B cell (primary cell): ENCODE measurements at regions of chr1 and their contacts with region 1.

Region 1: GRCh38 chr1:42766741-42767509 is at the starts of genes C1orf50 and P3H1:
- DNase-seq: peak; percentile 100
- ATAC-seq: peak; percentile 92
- H3K4me3 ChIP-seq: peak within 1 kb of the TSS; percentile 71 to 92 (median 76)
- H3K4me3 Mint-ChIP-seq: no peak within 1 kb of the TSS
- H3K27ac ChIP-seq: peak within 1 kb of the TSS; percentile 53 to 83
- H3K27ac Mint-ChIP-seq: peak within 1 kb of the TSS; percentile 98
- H3K4me1 ChIP-seq: peaks cover 27 to 31% of the 10 kb centered on the region in 2 donors
- H3K4me1 Mint-ChIP-seq: peaks cover 24% of the 10 kb centered on the region
- H3K27me3 ChIP-seq: no peaks in the 10 kb centered on the region
- H3K27me3 Mint-ChIP-seq: no peaks in the 10 kb centered on the region
- CTCF ChIP-seq: no peak
- total RNA-seq, gene C1orf50: 13.1 and 17.1 TPM in 2 replicates
- total RNA-seq, gene P3H1: 42.2 and 46.1 TPM in 2 replicates

Region 2: DNA sequence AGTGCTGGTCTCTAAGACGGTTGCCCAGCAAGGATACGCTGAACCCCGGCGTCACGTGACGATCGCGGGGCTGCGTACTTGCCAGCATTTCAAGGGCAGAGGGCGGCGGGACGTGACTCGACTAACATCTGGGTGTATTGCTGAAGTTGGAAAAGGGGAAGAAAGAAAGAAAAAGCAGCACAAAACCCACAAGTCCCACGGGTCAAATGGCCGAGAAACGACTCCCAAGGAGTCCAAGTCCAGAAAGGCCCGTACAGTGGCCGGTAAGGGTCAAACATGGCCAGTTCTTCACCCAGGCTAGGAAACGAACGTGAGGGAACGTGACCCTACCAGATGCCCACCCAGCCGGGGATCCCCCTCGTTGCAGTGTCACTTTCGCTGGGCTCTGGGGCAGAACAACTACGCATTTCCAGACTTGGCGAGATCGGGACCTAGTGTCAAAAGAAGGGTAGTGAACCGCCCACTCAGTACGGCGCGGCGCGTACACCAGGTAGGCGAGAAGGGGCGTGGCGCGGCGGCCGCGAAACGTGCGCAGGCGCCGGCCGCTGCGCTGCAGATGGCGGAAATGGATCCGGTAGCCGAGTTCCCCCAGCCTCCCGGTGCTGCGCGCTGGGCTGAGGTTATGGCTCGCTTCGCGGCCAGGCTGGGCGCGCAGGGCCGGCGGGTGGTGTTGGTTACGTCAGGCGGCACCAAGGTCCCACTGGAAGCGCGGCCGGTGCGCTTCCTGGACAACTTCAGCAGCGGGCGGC is 310.7 kb before region 1 on chr1 and contains the starts of genes PPCS and ZMYND12:
- CTCF ChIA-PET with region 1: no interaction called
- POLR2A ChIA-PET with region 1: no interaction called
- intact Hi-C with region 1: loop called (anchors 1 kb)
- DNase-seq: peak; percentile 99
- ATAC-seq: peak; percentile 88
- H3K4me3 ChIP-seq: peak within 1 kb of the TSS; percentile 89 to 99 (median 95)
- H3K4me3 Mint-ChIP-seq: peak within 1 kb of the TSS; percentile 99
- H3K27ac ChIP-seq: peak within 1 kb of the TSS; percentile 96 to 98
- H3K27ac Mint-ChIP-seq: peak within 1 kb of the TSS; percentile 99
- H3K4me1 ChIP-seq: peaks cover 18 to 21% of the 10 kb centered on the region in 2 donors
- H3K4me1 Mint-ChIP-seq: peaks cover 40% of the 10 kb centered on the region
- H3K27me3 ChIP-seq: no peaks in the 10 kb centered on the region
- H3K27me3 Mint-ChIP-seq: no peaks in the 10 kb centered on the region
- CTCF ChIP-seq: no peak
- total RNA-seq, gene PPCS: 68.2 and 74.9 TPM in 2 replicates
- total RNA-seq, gene ZMYND12: 0.27 and 0.79 TPM in 2 replicates

Region 3: GRCh38 chr1:42479599-42479998 is 287.3 kb before region 1 on chr1:
- CTCF ChIA-PET with region 1: no interaction called
- POLR2A ChIA-PET with region 1: no interaction called
- intact Hi-C with region 1: no loop called
- DNase-seq: no peak
- ATAC-seq: no peak
- H3K4me3 ChIP-seq: no peak overlapping the region
- H3K4me3 Mint-ChIP-seq: no peak overlapping the region
- H3K27ac ChIP-seq: no peak overlapping the region
- H3K27ac Mint-ChIP-seq: no peak overlapping the region
- H3K4me1 ChIP-seq: no peaks in the 10 kb centered on the region
- H3K4me1 Mint-ChIP-seq: no peaks in the 10 kb centered on the region
- H3K27me3 ChIP-seq: no peaks in the 10 kb centered on the region
- H3K27me3 Mint-ChIP-seq: no peaks in the 10 kb centered on the region
- CTCF ChIP-seq: no peak

Region 4: GRCh38 chr1:42777852-42778251 is 10.9 kb after region 1 on chr1:
- CTCF ChIA-PET with region 1: interaction called, 16 read pairs
- POLR2A ChIA-PET with region 1: interaction called, 5 read pairs
- intact Hi-C with region 1: no loop called
- DNase-seq: peak; percentile 45
- ATAC-seq: peak; percentile 60
- H3K4me3 ChIP-seq: no peak overlapping the region
- H3K4me3 Mint-ChIP-seq: no peak overlapping the region
- H3K27ac ChIP-seq: no peak overlapping the region
- H3K27ac Mint-ChIP-seq: no peak overlapping the region
- H3K4me1 ChIP-seq: no peaks in the 10 kb centered on the region
- H3K4me1 Mint-ChIP-seq: peaks cover 5% of the 10 kb centered on the region
- H3K27me3 ChIP-seq: no peaks in the 10 kb centered on the region
- H3K27me3 Mint-ChIP-seq: no peaks in the 10 kb centered on the region
- CTCF ChIP-seq: peak; percentile 70

Region 5: GRCh38 chr1:42886800-42887199 is 119.9 kb after region 1 on chr1:
- CTCF ChIA-PET with region 1: no interaction called
- POLR2A ChIA-PET with region 1: no interaction called
- intact Hi-C with region 1: no loop called
- DNase-seq: no peak
- ATAC-seq: no peak
- H3K4me3 ChIP-seq: no peak overlapping the region
- H3K4me3 Mint-ChIP-seq: no peak overlapping the region
- H3K27ac ChIP-seq: no peak overlapping the region
- H3K27ac Mint-ChIP-seq: no peak overlapping the region
- H3K4me1 ChIP-seq: no peaks in the 10 kb centered on the region
- H3K4me1 Mint-ChIP-seq: no peaks in the 10 kb centered on the region
- H3K27me3 ChIP-seq: no peaks in the 10 kb centered on the region
- H3K27me3 Mint-ChIP-seq: peaks cover 7% of the 10 kb centered on the region
- CTCF ChIP-seq: no peak

Region 6: DNA sequence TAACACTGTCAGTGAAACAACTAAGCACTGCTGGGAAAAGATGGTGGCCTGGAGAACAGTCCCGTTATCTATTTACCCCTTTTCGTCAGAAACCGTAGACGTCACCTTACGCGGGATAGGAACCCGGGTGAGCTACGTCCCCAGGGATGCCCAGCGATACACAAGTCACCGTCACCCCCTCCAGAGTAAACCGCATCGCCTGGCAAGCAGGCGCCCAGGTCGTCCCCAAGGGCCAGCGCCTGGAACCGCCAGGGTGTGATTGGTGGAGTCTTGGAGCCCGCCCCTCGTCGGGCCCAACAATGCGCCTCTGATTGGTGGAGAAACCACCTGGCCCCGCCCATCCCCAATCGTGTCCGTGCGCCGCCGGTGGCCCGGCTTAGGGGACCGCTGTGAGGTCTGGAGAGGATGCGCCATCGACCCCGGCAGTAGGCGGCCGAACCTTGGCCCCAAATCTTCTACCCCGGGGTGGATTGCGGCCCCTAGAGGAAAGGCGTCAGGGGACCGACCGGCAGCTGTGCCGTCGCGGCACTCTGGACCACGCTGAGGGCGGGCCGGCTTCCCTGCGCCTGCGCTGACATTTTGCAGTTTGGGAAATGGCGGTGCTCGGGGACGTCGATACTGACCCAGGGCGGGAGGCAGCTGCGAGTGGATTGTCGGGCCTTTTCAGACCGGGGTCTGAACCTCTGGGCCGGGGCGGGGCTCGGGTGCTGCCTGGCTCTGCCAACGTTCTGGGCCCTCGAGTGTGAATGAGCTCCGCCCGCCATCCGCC is 157.3 kb after region 1 on chr1:
- CTCF ChIA-PET with region 1: no interaction called
- POLR2A ChIA-PET with region 1: interaction called, 5 read pairs
- intact Hi-C with region 1: loop called (anchors 2 kb)
- DNase-seq: peak; percentile 97
- ATAC-seq: peak; percentile 86
- H3K4me3 ChIP-seq: peak overlapping the region; percentile 48 to 83 (median 80)
- H3K4me3 Mint-ChIP-seq: peak overlapping the region; percentile 86
- H3K27ac ChIP-seq: peak overlapping the region; percentile 96 to 98
- H3K27ac Mint-ChIP-seq: peak overlapping the region; percentile 92
- H3K4me1 ChIP-seq: peaks cover 23% of the 10 kb centered on the region in 2 donors
- H3K4me1 Mint-ChIP-seq: peaks cover 43% of the 10 kb centered on the region
- H3K27me3 ChIP-seq: no peaks in the 10 kb centered on the region
- H3K27me3 Mint-ChIP-seq: no peaks in the 10 kb centered on the region
- CTCF ChIP-seq: no peak

Region 7: GRCh38 chr1:43035821-43036741 is 269.2 kb after region 1 on chr1:
- CTCF ChIA-PET with region 1: no interaction called
- POLR2A ChIA-PET with region 1: no interaction called
- intact Hi-C with region 1: no loop called
- DNase-seq: no peak
- ATAC-seq: no peak
- H3K4me3 ChIP-seq: no peak overlapping the region
- H3K4me3 Mint-ChIP-seq: no peak overlapping the region
- H3K27ac ChIP-seq: no peak overlapping the region
- H3K27ac Mint-ChIP-seq: no peak overlapping the region
- H3K4me1 ChIP-seq: no peaks in the 10 kb centered on the region
- H3K4me1 Mint-ChIP-seq: peaks cover 4% of the 10 kb centered on the region
- H3K27me3 ChIP-seq: no peaks in the 10 kb centered on the region
- H3K27me3 Mint-ChIP-seq: peaks cover 3% of the 10 kb centered on the region
- CTCF ChIP-seq: no peak

Region 8: GRCh38 chr1:43367904-43368645 is 601.1 kb after region 1 on chr1 and contains the start of gene ELOVL1:
- CTCF ChIA-PET with region 1: interaction called, 3 read pairs
- POLR2A ChIA-PET with region 1: interaction called, 3 read pairs
- intact Hi-C with region 1: loop called (anchors 5 kb)
- DNase-seq: peak; percentile 94
- ATAC-seq: peak; percentile 88
- H3K4me3 ChIP-seq: peak within 1 kb of the TSS; percentile 64 to 90 (median 81)
- H3K4me3 Mint-ChIP-seq: peak within 1 kb of the TSS; percentile 96
- H3K27ac ChIP-seq: peak within 1 kb of the TSS; percentile 74 to 96
- H3K27ac Mint-ChIP-seq: peak within 1 kb of the TSS; percentile 97
- H3K4me1 ChIP-seq: peaks cover 18 to 26% of the 10 kb centered on the region in 2 donors
- H3K4me1 Mint-ChIP-seq: peaks cover 45% of the 10 kb centered on the region
- H3K27me3 ChIP-seq: no peaks in the 10 kb centered on the region
- H3K27me3 Mint-ChIP-seq: no peaks in the 10 kb centered on the region
- CTCF ChIP-seq: peak; percentile 13
- total RNA-seq, gene ELOVL1: 65.4 and 66.6 TPM in 2 replicates